Esophagus muscularis mucosa (tissue), 4 donors: ENCODE measurements at regions of chr15 and their contacts with region 1.

Region 1: DNA sequence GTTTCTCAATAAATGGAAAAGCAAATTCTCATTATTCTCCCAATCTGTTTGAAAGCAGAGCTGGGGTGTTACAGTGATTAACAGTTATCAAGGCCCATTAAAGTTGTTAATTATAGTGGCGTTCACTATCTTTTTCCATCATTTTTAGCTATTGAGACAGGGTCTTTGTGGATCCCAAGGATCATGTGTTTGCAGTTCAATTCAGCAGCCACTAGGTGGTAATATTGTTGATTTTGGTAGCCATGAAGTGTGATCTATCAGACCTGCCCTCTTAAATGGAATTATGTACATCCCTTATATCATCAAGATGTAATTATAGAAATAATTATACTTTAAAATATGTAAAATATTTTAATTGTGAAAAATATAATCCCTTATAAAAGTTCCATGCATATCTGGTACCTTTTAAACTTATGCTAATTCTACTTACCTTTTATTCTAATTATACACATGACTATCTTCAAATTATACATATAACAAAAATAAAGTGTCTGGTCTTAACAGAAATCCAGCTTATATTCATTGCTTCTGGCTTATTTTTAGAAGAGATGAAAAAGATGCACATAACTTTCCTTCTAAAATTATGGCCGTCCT is 126.4 kb downstream of the GREM1 start:
- DNase-seq: no peak
- H3K4me3 ChIP-seq: no peak overlapping the region
- H3K27ac ChIP-seq: no peak overlapping the region
- H3K4me1 ChIP-seq: peaks cover 0 to 10% (median 8%) of the 10 kb centered on the region in 4 donors
- H3K27me3 ChIP-seq: no peaks in the 10 kb centered on the region
- CTCF ChIP-seq: peak; percentile 58 to 70 (median 61)
- EP300 ChIP-seq: no peak
- POLR2A ChIP-seq: no peak

Region 2: DNA sequence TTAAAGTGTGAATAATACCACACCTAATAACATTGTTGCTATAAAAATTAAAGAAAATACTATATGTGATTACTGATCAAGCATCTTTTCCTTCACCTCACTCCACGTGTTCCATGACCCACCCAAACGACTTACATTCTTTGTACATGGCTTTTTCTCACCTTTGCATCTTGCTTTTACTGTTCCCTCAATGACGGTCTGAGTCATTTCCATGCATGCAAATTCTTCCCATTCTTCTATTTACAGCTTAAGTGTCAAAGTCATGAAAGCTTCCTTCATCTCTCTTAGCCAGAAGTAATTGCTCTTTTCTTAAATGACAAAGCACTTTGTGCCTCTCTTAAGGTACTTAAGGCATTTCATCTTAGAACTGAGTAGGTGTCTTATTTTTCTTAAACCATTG is 62.4 kb before region 1 on chr15:
- intact Hi-C with region 1: no loop called
- DNase-seq: no peak
- H3K4me3 ChIP-seq: no peak overlapping the region
- H3K27ac ChIP-seq: no peak overlapping the region
- H3K4me1 ChIP-seq: no peaks in the 10 kb centered on the region
- H3K27me3 ChIP-seq: no peaks in the 10 kb centered on the region
- CTCF ChIP-seq: no peak
- EP300 ChIP-seq: no peak
- POLR2A ChIP-seq: no peak

Region 3: DNA sequence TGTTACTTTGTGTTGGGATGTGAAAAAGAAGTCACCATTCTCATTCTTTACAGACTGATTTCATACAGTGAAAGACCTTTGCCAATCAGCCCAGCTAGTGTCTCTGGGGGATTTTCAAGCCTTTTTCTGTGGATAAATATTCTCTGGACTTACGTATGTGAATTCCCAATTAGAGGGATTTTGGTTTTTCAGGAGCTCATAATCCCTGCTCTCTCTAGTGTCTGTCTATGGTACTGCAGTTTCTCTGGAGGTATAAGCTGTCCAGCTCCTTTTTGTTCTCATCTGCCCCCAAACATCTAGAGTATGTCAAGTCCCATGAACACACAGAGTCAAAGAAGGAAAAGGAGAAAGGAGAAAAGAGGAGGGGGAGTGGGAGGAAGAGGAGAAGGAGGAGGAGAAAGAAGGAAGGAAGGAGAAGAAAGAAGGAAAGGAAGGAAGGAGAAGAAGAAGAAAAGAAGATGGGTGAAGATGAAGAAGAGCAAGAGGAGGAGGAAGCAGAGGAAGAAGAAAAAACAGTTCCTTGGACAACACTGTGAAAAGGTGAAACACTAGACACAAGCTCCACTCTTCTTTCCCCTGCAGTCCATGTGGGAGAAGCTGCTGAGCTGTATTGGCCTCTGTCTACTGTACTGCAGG is 92.2 kb after region 1 on chr15:
- intact Hi-C with region 1: no loop called
- DNase-seq: no peak
- H3K4me3 ChIP-seq: no peak overlapping the region
- H3K27ac ChIP-seq: no peak overlapping the region
- H3K4me1 ChIP-seq: peaks cover 0 to 14% (median 4%) of the 10 kb centered on the region in 4 donors
- H3K27me3 ChIP-seq: no peaks in the 10 kb centered on the region
- CTCF ChIP-seq: peak in 2 of 3 experiments; percentile 37 to 66
- EP300 ChIP-seq: no peak
- POLR2A ChIP-seq: no peak

Region 4: DNA sequence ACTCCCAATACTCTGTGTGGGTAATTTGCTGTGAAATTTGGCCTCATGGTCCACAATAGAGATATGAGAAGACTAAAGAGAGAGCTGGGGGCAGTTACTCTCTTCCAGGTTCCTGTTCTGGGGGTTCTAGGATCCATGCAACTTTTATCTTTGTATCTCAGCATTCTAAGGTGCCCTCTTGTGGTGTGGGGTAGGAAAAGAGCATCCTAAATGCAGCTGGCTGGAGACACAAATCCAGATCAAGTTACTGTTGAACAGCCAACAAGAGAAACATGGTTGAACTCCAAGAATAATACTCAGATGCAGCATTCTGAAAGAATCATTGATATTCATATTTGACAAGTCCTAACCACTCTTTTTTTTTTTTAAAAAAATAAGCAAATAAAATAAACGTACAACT is 111.8 kb after region 1 on chr15:
- intact Hi-C with region 1: loop called (anchors 10 kb)
- DNase-seq: no peak
- H3K4me3 ChIP-seq: no peak overlapping the region
- H3K27ac ChIP-seq: peak overlapping the region; percentile 49 to 71 (median 63)
- H3K4me1 ChIP-seq: peaks cover 0 to 71% (median 68%) of the 10 kb centered on the region in 4 donors
- H3K27me3 ChIP-seq: no peaks in the 10 kb centered on the region
- CTCF ChIP-seq: peak; percentile 57 to 68 (median 66)
- EP300 ChIP-seq: no peak
- POLR2A ChIP-seq: no peak